SK-N-SH (cell line): ENCODE measurements at regions of chr20 and their contacts with region 1.

Region 1: GRCh38 chr20:31661625-31662371 is 24.1 kb downstream of the COX4I2 start:
- DNase-seq: peak; percentile 91
- H3K4me3 ChIP-seq: peak overlapping the region; percentile 10 to 46; a peak in 2 of 4 replicates
- H3K27ac ChIP-seq: peak overlapping the region; percentile 58 to 66; a peak in 3 of 4 replicates
- H3K4me1 ChIP-seq: peaks cover 6 to 32% of the 10 kb centered on the region in 2 experiments; a peak in 3 of 4 replicates
- H3K27me3 ChIP-seq: no peaks in the 10 kb centered on the region
- CTCF ChIP-seq: peak; percentile 63
- EP300 ChIP-seq: no peak
- RAD21 ChIP-seq: peak; percentile 60

Region 2: DNA sequence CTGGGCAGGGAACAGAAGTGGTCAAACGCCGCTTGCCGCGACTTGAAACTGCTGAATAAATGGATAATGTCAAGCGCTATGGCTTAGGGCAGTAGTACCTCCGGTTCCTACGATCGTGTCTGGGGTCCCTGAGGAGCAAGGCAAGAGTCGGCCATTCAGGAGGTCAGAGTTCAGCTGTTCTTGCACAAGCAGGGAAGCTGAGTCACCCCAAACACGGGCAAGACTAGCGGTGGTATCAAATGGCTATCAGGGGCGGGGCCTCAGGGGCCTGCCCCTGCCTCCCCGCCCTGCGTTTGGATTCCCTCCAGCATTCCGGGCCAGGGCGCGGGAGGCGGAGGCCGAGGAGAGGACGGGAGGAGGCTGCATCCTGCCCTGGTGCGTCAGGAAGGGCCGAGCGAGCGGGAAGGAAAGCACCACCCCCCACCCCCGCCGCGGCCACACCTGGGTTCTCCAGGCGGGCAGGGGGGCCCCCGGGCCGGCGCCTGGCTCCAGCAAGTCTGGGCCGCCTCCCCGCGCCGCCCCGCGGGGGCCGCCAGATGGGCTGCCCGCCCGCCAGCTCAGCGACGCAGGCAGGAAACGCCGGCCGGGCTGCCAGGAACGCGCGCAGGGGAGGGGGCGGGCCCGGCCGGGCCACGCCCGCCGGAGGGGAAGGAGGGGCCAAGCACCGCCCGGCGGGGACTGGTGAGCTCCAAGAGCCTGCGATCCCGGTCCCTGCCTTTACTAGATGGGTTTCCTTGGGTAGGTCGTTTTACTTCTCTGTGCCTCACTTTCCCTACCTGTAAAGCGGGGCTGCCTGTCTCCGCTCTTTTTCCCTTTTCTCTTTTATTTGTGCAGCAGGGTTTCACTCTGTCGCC is 88.9 kb before region 1 on chr20:
- CTCF ChIA-PET with region 1: interaction called, 13 read pairs
- POLR2A ChIA-PET with region 1: no interaction called
- DNase-seq: peak; percentile 93
- H3K4me3 ChIP-seq: peak overlapping the region; percentile 52 to 59
- H3K27ac ChIP-seq: peak overlapping the region; percentile 93 to 97
- H3K4me1 ChIP-seq: peaks cover 45 to 48% of the 10 kb centered on the region in 2 experiments
- H3K27me3 ChIP-seq: no peaks in the 10 kb centered on the region
- CTCF ChIP-seq: no peak
- EP300 ChIP-seq: peak; percentile 63 to 94
- RAD21 ChIP-seq: no peak; the same call in 1 of the 2 replicates

Region 3: GRCh38 chr20:31587545-31588389 is 74.0 kb before region 1 on chr20:
- CTCF ChIA-PET with region 1: no interaction called
- POLR2A ChIA-PET with region 1: no interaction called
- DNase-seq: peak; percentile 77
- H3K4me3 ChIP-seq: no peak overlapping the region; a peak in 1 of 4 replicates
- H3K27ac ChIP-seq: no peak overlapping the region
- H3K4me1 ChIP-seq: no peaks in the 10 kb centered on the region; a peak in 1 of 4 replicates
- H3K27me3 ChIP-seq: no peaks in the 10 kb centered on the region
- CTCF ChIP-seq: no peak
- EP300 ChIP-seq: no peak
- RAD21 ChIP-seq: no peak

Region 4: DNA sequence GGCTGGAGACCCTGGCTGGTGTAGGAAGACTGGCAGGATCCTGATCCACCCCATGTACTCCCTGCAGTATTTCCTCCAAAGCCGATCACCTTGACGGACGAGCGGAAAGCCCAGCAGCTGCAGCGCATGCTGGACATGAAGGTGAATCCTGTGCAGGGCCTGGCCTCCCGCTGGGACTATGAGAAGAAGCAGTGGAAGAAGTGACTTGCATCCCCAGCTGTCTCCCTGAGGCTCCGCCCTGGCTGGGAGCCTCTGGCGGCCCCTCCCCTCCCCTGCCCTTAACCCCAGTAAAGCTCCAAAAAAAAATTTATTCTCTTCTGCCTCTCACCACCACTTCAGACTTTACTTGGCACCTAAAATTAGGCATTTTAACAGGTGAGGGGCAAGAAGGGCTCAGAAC is 17.1 kb before region 1 on chr20:
- CTCF ChIA-PET with region 1: interaction called, 25 read pairs
- POLR2A ChIA-PET with region 1: no interaction called
- DNase-seq: no peak
- H3K4me3 ChIP-seq: no peak overlapping the region
- H3K27ac ChIP-seq: no peak overlapping the region
- H3K4me1 ChIP-seq: peaks cover 0 to 12% of the 10 kb centered on the region in 2 experiments; a peak in 1 of 4 replicates
- H3K27me3 ChIP-seq: no peaks in the 10 kb centered on the region
- CTCF ChIP-seq: no peak
- EP300 ChIP-seq: no peak
- RAD21 ChIP-seq: no peak

Region 5: GRCh38 chr20:31684153-31685015 is 22.6 kb after region 1 on chr20:
- CTCF ChIA-PET with region 1: interaction called, 13 read pairs
- POLR2A ChIA-PET with region 1: no interaction called
- DNase-seq: no peak
- H3K4me3 ChIP-seq: no peak overlapping the region
- H3K27ac ChIP-seq: no peak overlapping the region; a peak in 1 of 4 replicates
- H3K4me1 ChIP-seq: peaks cover 4 to 12% of the 10 kb centered on the region in 2 experiments; a peak in 2 of 4 replicates
- H3K27me3 ChIP-seq: no peaks in the 10 kb centered on the region
- CTCF ChIP-seq: no peak
- EP300 ChIP-seq: no peak
- RAD21 ChIP-seq: no peak